ENCODE measurements at regions of chr3 and their contacts with region 1.

Region 1: GRCh38 chr3:161423911-161424522 is 52.7 kb upstream of the SPTSSB start:
- DNase-seq: no peak
- ATAC-seq: peak; percentile 61; the same call in 1 of the 2 replicates
- H3K4me3 ChIP-seq: no peak overlapping the region
- H3K27ac ChIP-seq: peak overlapping the region; percentile 49; the same call in 1 of the 2 replicates
- H3K4me1 ChIP-seq: peaks cover 10% of the 10 kb centered on the region
- H3K27me3 ChIP-seq: no peaks in the 10 kb centered on the region
- CTCF ChIP-seq: peak; percentile 74; the same call in 1 of the 2 replicates

Region 2: DNA sequence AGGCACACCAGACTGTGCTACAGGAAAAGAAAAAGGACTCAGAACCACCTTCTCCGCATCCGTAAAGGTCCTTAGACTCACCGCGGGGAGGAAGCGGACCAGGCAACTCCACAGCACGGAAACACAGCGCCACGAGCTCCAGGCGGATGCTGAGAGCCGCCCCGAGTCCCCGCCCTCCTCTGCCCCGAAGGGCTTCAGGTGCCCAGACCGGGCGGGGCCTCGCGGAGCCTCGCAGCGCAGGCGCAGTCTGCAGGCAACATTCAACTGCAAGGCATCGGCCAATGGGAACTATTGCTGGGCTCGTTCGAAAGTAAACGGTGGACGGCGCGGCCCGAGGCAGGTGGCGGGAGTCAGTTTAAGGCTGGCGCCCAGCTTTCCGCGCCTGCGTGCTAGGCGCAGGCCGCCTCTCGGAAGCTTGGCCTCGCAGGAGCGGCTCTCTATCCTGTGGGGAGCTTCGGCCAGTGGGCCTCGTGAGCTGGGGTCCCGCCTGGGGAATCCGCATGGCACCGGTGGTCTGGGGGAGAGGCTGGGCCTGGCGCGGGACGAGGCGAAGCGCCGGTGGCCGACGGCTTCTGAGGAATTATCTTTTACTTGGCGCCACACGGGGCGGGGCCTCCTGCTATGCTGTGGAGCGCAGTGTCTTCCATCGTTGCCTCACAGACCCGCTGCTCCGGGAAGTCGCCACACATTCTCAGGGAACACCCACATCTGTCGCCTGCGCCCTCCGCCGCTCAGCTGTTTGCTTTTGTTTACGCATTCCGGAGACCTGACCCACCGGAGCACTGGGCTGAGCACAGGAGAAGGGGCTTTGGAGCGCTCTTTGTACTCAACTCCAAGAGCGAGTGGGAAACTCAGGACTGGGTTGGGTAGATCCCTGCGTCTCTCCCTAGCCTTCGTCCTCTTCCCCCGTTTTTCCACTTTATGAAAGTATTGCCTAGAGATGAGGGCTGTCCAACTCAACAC is 974.1 kb before region 1 on chr3 and contains the start of gene TRIM59:
- CTCF ChIA-PET with region 1: interaction called, 14 read pairs
- POLR2A ChIA-PET with region 1: no interaction called
- in situ Hi-C with region 1: no loop called
- intact Hi-C with region 1: no loop called
- DNase-seq: peak; percentile 75
- ATAC-seq: peak; percentile 94
- H3K4me3 ChIP-seq: peak within 1 kb of the TSS; percentile 82 to 83
- H3K27ac ChIP-seq: peak within 1 kb of the TSS; percentile 95
- H3K4me1 ChIP-seq: peaks cover 17% of the 10 kb centered on the region
- H3K27me3 ChIP-seq: no peaks in the 10 kb centered on the region
- CTCF ChIP-seq: no peak
- total RNA-seq, gene TRIM59: 27.9 TPM

Region 3: DNA sequence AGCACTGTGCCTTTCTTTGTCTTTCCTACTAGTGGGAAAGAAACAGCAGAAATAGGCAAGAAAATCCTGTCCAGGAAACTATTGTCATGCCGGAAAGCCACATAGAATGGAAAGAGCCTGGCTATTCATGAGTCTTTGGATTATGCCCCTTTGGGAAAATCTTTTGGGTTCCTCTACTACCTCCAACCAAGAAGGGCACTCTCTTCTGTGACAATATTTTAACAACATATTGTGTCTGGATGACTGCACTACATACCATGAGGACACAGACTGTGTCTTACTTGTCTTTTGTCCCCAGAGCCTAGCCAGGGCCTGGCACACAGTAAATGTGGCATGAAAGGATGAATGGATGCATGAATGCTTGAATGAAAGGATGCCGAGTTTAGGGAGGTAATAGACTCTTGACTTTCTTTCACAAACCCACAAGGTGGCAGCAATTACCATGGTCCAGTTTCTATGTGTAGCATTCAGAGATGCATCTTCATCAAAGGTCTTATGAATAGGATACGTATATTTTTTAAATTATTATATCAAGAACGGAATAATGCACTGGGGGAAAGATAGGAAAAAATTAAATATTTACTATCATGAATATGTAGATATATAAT is 716.7 kb before region 1 on chr3:
- CTCF ChIA-PET with region 1: no interaction called
- POLR2A ChIA-PET with region 1: no interaction called
- in situ Hi-C with region 1: no loop called
- intact Hi-C with region 1: loop called (anchors 10 kb)
- DNase-seq: peak; percentile 38
- ATAC-seq: peak; percentile 97
- H3K4me3 ChIP-seq: no peak overlapping the region
- H3K27ac ChIP-seq: peak overlapping the region; percentile 3; the same call in 1 of the 2 replicates
- H3K4me1 ChIP-seq: no peaks in the 10 kb centered on the region
- H3K27me3 ChIP-seq: no peaks in the 10 kb centered on the region; the same call in 1 of the 2 replicates
- CTCF ChIP-seq: peak; percentile 81

Region 4: GRCh38 chr3:160956806-160957205 is 467.2 kb before region 1 on chr3:
- CTCF ChIA-PET with region 1: interaction called, 5 read pairs
- POLR2A ChIA-PET with region 1: no interaction called
- in situ Hi-C with region 1: no loop called
- intact Hi-C with region 1: loop called (anchors 10 kb)
- DNase-seq: no peak
- ATAC-seq: peak; percentile 63; the same call in 1 of the 2 replicates
- H3K4me3 ChIP-seq: no peak overlapping the region
- H3K27ac ChIP-seq: no peak overlapping the region
- H3K4me1 ChIP-seq: no peaks in the 10 kb centered on the region
- H3K27me3 ChIP-seq: no peaks in the 10 kb centered on the region
- CTCF ChIP-seq: peak; percentile 47; the same call in 1 of the 2 replicates

Region 5: GRCh38 chr3:161096771-161097355 is 327.2 kb before region 1 on chr3:
- CTCF ChIA-PET with region 1: no interaction called
- POLR2A ChIA-PET with region 1: no interaction called
- in situ Hi-C with region 1: no loop called
- intact Hi-C with region 1: loop called (anchors 5 kb)
- DNase-seq: no peak
- ATAC-seq: peak; percentile 82
- H3K4me3 ChIP-seq: no peak overlapping the region
- H3K27ac ChIP-seq: no peak overlapping the region
- H3K4me1 ChIP-seq: no peaks in the 10 kb centered on the region
- H3K27me3 ChIP-seq: no peaks in the 10 kb centered on the region
- CTCF ChIP-seq: peak; percentile 81

Region 6: DNA sequence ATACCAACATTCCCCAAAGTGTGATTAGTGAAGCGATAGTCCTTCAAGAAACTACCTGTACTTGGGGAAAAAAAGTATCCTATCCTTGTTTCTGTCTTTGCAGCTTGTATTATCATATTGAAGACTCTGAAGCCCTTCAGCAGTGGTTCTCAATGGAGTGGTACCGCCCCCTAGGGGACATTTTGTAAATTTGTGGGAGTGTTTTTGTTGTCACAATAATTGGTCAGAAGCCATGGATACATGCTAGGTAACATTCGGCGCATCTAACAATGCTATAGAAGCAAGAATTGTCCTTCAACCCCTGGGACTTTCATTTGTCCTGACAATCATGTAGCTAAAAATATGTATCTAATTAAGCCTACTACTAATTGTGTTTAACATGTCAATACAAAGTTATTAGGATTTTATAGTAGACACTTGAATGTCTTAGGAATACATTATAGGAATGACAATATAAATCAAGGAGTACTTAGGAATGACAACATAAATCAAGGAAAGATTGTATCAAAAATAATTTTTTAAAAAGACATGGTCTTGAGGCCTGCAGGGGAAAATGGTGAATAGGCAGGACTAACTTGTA is 149.2 kb before region 1 on chr3:
- CTCF ChIA-PET with region 1: no interaction called
- POLR2A ChIA-PET with region 1: no interaction called
- in situ Hi-C with region 1: no loop called
- intact Hi-C with region 1: loop called (anchors 5 kb)
- DNase-seq: no peak
- ATAC-seq: no peak
- H3K4me3 ChIP-seq: no peak overlapping the region
- H3K27ac ChIP-seq: no peak overlapping the region
- H3K4me1 ChIP-seq: no peaks in the 10 kb centered on the region
- H3K27me3 ChIP-seq: no peaks in the 10 kb centered on the region
- CTCF ChIP-seq: peak; percentile 66

Region 7: DNA sequence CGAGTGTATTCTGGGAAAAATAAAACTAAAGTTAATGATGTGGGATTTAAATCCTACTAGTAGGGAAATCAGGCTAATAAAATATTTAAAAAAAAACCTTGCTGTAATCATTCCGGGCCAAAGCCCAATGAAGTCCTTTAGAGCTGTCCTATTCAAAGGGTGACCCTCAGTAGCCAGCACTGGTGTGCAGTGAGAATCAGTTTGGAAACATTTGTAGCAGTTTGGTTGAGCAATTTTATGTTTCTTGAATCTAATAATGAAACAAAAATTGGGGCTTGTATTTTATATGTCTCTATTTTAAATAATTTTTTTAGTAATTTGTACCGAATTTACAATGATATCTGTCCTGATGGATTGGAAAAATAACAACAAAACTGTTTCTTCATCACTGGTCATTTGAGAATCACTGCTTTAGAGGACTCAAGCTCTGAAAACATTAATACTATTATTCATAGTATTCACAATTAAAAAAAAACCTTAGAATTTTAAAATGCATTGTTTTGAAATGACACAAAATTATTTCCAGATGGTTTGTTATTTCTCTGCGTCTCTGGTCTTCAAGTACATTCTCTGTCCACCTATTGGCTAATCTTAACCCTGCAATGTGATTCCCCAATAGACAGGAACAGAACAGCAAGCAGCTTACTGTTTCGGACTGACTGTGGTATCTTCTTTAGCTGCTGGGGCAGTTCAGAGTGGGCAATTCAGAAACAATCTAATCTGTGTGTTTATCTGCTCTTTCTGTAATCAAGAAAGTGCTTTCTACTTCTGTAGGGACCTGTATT is 143.8 kb after region 1 on chr3:
- CTCF ChIA-PET with region 1: no interaction called
- POLR2A ChIA-PET with region 1: no interaction called
- in situ Hi-C with region 1: no loop called
- intact Hi-C with region 1: no loop called
- DNase-seq: no peak
- ATAC-seq: no peak
- H3K4me3 ChIP-seq: no peak overlapping the region
- H3K27ac ChIP-seq: no peak overlapping the region
- H3K4me1 ChIP-seq: no peaks in the 10 kb centered on the region
- H3K27me3 ChIP-seq: no peaks in the 10 kb centered on the region
- CTCF ChIP-seq: no peak

Region 8: GRCh38 chr3:161821198-161821990 is 397.4 kb after region 1 on chr3:
- CTCF ChIA-PET with region 1: no interaction called
- POLR2A ChIA-PET with region 1: no interaction called
- in situ Hi-C with region 1: no loop called
- intact Hi-C with region 1: no loop called
- DNase-seq: no peak
- ATAC-seq: no peak
- H3K4me3 ChIP-seq: no peak overlapping the region
- H3K27ac ChIP-seq: no peak overlapping the region
- H3K4me1 ChIP-seq: no peaks in the 10 kb centered on the region
- H3K27me3 ChIP-seq: no peaks in the 10 kb centered on the region
- CTCF ChIP-seq: no peak

Measured in Panc1 (cell line).